Ovary (tissue), 10 donors: ENCODE measurements at regions of chr20 and their contacts with region 1.

Region 1: DNA sequence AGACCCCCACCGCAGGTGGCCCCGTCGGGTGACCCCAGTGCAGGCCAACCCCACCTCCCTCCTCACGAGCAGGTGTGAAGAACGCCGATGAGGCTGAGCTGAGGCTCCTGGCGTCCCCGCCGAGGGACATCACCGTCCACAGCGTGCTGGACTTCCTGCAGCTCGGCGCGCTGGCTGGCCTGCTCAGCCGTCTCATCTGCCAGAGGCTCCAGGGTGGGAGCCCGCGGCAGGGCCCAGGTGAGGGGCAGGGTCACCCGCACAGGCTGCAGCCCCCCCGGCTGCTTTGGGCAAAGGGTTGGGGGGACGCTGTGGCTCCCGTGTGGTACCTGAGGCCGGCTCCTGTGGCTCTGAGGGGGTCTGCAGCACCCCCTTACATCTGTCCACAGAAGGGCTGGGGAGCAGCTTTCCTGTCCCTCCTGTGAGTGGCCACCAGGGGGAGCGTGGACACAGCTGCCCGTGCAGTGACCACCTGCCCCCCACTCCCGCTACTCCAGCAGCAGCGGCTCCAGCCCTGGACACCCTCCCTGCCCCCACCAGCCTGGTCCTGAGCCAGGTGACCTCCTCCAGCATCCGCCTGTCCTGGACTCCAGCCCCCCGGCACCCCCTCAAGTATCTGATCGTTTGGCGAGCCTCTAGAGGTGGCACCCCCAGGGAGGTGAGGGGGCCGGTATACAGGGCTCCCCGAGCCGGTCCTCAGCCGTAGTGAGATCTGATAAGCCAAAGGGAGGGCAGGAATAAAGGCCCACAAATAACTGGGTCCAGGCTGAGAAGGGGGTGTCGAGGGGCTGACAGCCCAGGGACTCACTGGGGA is 16.5 kb downstream of the COL20A1 start:
- DNase-seq: peak; percentile 44 to 76 (median 61)
- H3K4me3 ChIP-seq: no peak overlapping the region
- H3K27ac ChIP-seq: no peak overlapping the region
- H3K4me1 ChIP-seq: no peaks in the 10 kb centered on the region
- H3K27me3 ChIP-seq: no peaks in the 10 kb centered on the region
- CTCF ChIP-seq: peak; percentile 41 to 83 (median 79)
- EP300 ChIP-seq: no peak
- POLR2A ChIP-seq: no peak

Region 2: DNA sequence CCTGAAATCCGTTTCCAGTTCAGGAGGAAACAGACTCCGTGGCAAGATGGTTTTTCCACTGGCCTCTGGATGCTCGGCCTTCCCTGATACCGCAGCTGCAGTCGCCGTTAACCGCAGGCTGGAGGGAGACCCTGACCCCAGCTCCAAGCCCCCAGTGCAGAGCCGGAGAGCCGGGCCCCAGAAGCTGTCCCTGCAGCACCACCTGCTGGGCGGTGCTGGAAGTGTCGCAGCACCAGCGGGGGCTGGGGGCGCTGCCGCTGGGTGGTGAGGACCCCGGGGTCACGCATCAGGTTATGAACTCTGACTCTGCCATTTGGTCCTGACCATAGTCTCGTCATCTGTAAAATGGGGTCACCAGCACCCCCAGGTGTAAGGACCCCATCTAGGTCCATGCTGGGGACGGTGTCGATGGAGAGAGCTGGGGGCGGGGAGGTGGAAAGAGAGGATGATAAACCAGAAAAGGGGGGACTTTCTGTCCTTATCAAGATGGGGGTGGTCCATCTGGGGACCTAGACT is 72.4 kb after region 1 on chr20:
- intact Hi-C with region 1: loop called (anchors 2 to 5 kb)
- DNase-seq: peak in 2 of 5 donors; percentile 50 to 56
- H3K4me3 ChIP-seq: no peak overlapping the region
- H3K27ac ChIP-seq: no peak overlapping the region
- H3K4me1 ChIP-seq: no peaks in the 10 kb centered on the region
- H3K27me3 ChIP-seq: no peaks in the 10 kb centered on the region
- CTCF ChIP-seq: peak; percentile 31 to 86 (median 54)
- EP300 ChIP-seq: no peak
- POLR2A ChIP-seq: no peak

Region 3: DNA sequence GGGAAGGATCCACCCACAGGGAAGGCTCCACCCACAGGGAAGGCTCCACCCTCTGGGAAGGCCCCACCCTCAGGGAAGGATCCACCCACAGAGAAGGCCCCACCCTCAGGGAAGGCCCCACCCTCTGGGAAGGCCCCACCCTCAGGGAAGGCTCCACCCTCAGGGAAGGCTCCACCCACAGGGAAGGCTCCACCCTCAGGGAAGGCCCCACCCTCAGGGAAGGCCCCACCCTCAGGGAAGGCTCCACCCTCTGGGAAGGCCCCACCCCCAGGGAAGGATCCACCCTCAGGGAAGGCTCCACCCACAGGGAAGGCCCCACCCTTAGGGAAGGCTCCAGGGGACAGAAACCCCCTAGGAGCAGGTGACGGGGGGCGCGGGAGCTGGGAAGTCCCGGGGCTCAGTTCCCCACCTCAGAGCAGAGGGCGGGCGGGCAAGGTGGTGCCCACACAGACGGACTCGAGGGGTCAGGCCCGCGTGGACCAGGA is 123.2 kb after region 1 on chr20:
- intact Hi-C with region 1: no loop called
- DNase-seq: no peak
- H3K4me3 ChIP-seq: no peak overlapping the region
- H3K27ac ChIP-seq: no peak overlapping the region
- H3K4me1 ChIP-seq: no peaks in the 10 kb centered on the region
- H3K27me3 ChIP-seq: no peaks in the 10 kb centered on the region
- CTCF ChIP-seq: no peak
- EP300 ChIP-seq: no peak
- POLR2A ChIP-seq: no peak

Region 4: DNA sequence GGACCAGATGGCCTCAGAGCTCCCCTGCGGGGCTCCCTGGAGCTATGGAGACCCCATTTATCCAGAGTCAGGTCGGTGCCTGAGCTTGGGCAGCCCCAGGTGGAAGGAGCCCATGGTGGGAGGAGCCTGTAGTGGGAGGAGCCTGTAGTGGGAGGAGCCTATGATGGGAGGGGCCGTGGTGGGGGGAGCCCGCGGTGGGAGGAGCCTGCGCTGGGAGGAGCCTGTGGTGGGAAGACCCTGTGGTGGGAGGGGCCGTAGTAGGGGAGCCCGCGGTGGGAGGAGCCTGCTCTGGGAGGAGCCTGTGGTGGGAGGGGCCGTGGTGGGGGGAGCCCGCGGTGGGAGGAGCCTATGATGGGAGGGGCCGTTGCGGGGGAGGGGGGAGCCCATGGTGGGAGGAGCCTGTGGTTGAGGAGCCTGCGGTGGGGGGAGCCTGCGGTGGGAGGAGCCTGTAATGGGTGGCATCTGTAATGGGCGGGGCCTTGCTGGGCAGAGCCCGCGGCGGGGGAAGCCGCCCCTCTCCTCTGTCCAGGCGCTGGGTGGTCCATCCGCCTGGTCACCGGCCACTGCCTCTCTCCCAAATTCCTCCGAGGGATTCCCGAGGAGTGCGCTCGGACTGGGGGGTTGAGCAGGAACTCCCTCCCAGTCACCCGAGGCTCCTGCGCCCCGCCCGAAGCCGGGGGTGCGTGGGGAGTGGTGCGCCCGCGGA is 243.9 kb after region 1 on chr20:
- intact Hi-C with region 1: no loop called
- DNase-seq: peak; percentile 55 to 85 (median 75)
- H3K4me3 ChIP-seq: peak overlapping the region; percentile 39
- H3K27ac ChIP-seq: no peak overlapping the region
- H3K4me1 ChIP-seq: peaks cover 1% of the 10 kb centered on the region
- H3K27me3 ChIP-seq: no peaks in the 10 kb centered on the region
- CTCF ChIP-seq: no peak
- EP300 ChIP-seq: no peak
- POLR2A ChIP-seq: no peak